Sigmoid colon (tissue), 7 donors: ENCODE measurements at regions of chr1 and their contacts with region 1.

Region 1: GRCh38 chr1:111755331-111756123 is at the start of gene DDX20:
- DNase-seq: peak; percentile 97
- H3K4me3 ChIP-seq: peak within 1 kb of the TSS; percentile 75 to 88 (median 78)
- H3K27ac ChIP-seq: peak within 1 kb of the TSS; percentile 83 to 94 (median 93)
- H3K4me1 ChIP-seq: peaks cover 0 to 36% (median 30%) of the 10 kb centered on the region in 4 donors
- H3K27me3 ChIP-seq: no peaks in the 10 kb centered on the region
- CTCF ChIP-seq: peak; percentile 78 to 90 (median 88)
- EP300 ChIP-seq: peak in 2 of 4 donors; percentile 60 to 71
- POLR2A ChIP-seq: peak; percentile 16 to 46
- total RNA-seq, gene DDX20: 18.7 to 30.9 (median 22.9) TPM

Region 2: DNA sequence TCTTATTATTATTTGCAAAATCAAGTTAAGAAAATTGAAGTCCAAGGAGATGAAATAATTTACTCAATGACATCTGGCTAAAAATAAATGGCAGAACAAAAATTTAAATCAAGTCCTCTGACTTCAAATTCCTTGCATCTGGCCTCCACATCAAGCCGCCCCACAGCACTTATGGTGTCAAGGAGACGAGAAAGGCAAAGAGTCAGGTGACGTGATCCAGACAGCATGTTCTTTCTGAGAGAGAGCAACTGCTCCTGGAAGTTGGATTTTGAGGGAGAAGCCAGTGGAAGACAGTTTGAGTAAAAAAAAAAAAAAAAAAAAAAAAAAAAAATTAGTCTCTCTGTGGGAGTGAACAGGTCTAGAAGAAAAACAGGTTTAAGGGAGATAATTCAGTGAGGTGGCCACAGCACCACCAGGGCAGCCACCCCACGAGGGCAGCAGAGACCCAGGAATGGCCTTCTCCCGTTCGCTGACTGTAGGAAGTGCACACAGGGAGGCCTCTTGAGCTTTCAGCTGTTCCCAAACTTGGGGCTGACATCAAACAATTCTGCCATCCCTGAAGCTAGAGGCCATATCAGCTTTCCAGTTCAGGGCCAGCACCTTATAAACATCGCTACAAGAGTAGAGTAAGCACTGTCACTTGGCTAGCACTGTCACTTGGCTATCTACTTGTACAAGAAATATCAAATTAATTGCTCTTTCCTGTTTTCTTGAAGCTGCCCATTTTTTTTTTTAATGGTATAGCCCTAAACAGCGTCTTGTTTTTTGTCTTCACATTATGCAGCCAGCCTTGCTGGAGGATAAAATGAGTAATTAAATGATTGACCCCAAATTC is 273.9 kb before region 1 on chr1:
- intact Hi-C with region 1: loop called (anchors 1 kb)
- DNase-seq: peak; percentile 91
- H3K4me3 ChIP-seq: no peak overlapping the region
- H3K27ac ChIP-seq: peak overlapping the region in 1 of 4 donors; percentile 33
- H3K4me1 ChIP-seq: peaks cover 0 to 19% (median 11%) of the 10 kb centered on the region in 4 donors
- H3K27me3 ChIP-seq: no peaks in the 10 kb centered on the region
- CTCF ChIP-seq: peak; percentile 61 to 83 (median 81)
- EP300 ChIP-seq: no peak
- POLR2A ChIP-seq: no peak

Region 3: GRCh38 chr1:111507411-111508201 is 247.9 kb before region 1 on chr1:
- intact Hi-C with region 1: loop called (anchors 2 kb)
- DNase-seq: peak; percentile 89
- H3K4me3 ChIP-seq: peak overlapping the region in 3 of 4 donors; percentile 26 to 31 (median 30)
- H3K27ac ChIP-seq: peak overlapping the region; percentile 91 to 95 (median 94)
- H3K4me1 ChIP-seq: peaks cover 0 to 74% (median 60%) of the 10 kb centered on the region in 4 donors
- H3K27me3 ChIP-seq: no peaks in the 10 kb centered on the region
- CTCF ChIP-seq: no peak
- EP300 ChIP-seq: no peak
- POLR2A ChIP-seq: no peak

Region 4: GRCh38 chr1:111720274-111720976 is 35.1 kb before region 1 on chr1:
- intact Hi-C with region 1: loop called (anchors 2 kb)
- DNase-seq: no peak
- H3K4me3 ChIP-seq: no peak overlapping the region
- H3K27ac ChIP-seq: peak overlapping the region in 2 of 4 donors; percentile 11 to 19
- H3K4me1 ChIP-seq: peaks cover 0 to 37% (median 31%) of the 10 kb centered on the region in 4 donors
- H3K27me3 ChIP-seq: no peaks in the 10 kb centered on the region
- CTCF ChIP-seq: no peak
- EP300 ChIP-seq: no peak
- POLR2A ChIP-seq: no peak

Region 5: GRCh38 chr1:111739194-111739924 is 16.2 kb before region 1 on chr1 and contains the start of gene INKA2:
- intact Hi-C with region 1: loop called (anchors 2 kb)
- DNase-seq: peak; percentile 96
- H3K4me3 ChIP-seq: peak within 1 kb of the TSS; percentile 56 to 67 (median 62)
- H3K27ac ChIP-seq: peak within 1 kb of the TSS; percentile 87 to 97 (median 90)
- H3K4me1 ChIP-seq: peaks cover 0 to 62% (median 46%) of the 10 kb centered on the region in 4 donors
- H3K27me3 ChIP-seq: no peaks in the 10 kb centered on the region
- CTCF ChIP-seq: no peak
- EP300 ChIP-seq: no peak
- POLR2A ChIP-seq: peak; percentile 69 to 70
- total RNA-seq, gene INKA2: 2.8 to 5.4 (median 4.4) TPM

Region 6: GRCh38 chr1:111801071-111801841 is 45.7 kb after region 1 on chr1:
- intact Hi-C with region 1: no loop called
- DNase-seq: no peak
- H3K4me3 ChIP-seq: no peak overlapping the region
- H3K27ac ChIP-seq: no peak overlapping the region
- H3K4me1 ChIP-seq: no peaks in the 10 kb centered on the region
- H3K27me3 ChIP-seq: no peaks in the 10 kb centered on the region
- CTCF ChIP-seq: peak in 2 of 4 experiments; percentile 17
- EP300 ChIP-seq: no peak
- POLR2A ChIP-seq: no peak